ENCODE measurements at regions of chr3 and their contacts with region 1.

Region 1: GRCh38 chr3:188006726-188007393 is 147.1 kb upstream of the LPP start:
- DNase-seq: no peak

Region 2: GRCh38 chr3:187989575-187990153 is 17.2 kb before region 1 on chr3:
- intact Hi-C with region 1: loop called in 1 of 2 experiments (anchors 1 kb)
- DNase-seq: no peak